Heart right ventricle (tissue), 16 donors: ENCODE measurements at regions of chr20 and their contacts with region 1.

Region 1: DNA sequence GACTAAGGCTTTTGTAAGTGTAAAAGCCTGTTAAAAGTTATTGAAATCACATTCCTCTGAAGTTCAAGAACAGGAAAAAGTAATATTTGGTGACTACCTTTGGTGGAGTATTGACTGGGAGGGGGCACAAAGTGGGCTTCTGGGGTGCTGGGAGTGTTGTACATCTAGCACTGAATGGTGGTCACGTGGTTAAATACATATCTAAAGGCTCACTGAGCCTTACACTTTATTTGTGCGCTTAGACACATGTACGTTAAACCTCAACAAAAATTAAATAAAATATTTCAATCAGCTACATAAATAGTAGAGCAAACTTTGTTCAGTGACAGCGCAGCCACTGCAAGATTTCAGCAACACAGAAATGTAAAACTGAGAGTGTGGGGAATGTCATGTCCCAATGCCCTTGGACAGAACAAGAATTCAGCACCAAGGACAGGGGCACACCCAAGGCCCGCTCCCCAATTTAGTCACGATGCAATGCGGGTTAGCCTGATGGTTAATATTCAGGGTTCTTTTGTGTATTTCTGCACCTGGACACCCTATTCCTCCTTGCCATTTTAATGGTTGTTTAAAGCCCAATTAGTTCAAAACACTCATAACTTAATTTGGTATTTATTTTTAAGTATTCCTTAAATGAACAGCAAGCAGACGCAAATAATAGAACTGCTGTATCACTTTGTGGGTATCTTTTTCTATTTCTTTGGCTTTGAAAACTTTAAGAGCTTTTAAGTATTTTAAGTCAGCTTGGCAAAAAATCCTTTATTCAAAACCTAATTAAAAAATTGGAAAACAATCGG is 37.4 kb downstream of the ANGPT4 start:
- DNase-seq: peak in 1 of 2 donors; percentile 33
- ATAC-seq: no peak
- H3K4me3 ChIP-seq: no peak overlapping the region
- H3K27ac ChIP-seq: no peak overlapping the region
- H3K4me1 ChIP-seq: peaks cover 0 to 11% (median 0%) of the 10 kb centered on the region in 9 donors
- H3K27me3 ChIP-seq: peaks cover 0 to 8% (median 0%) of the 10 kb centered on the region in 7 donors
- CTCF ChIP-seq: no peak

Region 2: GRCh38 chr20:891058-891705 is 12.5 kb after region 1 on chr20:
- intact Hi-C with region 1: loop called in 1 of 10 experiments (anchors 1 kb)
- DNase-seq: peak; percentile 18 to 74
- ATAC-seq: peak; percentile 17 to 95 (median 76)
- H3K4me3 ChIP-seq: no peak overlapping the region
- H3K27ac ChIP-seq: no peak overlapping the region
- H3K4me1 ChIP-seq: peaks cover 0 to 24% (median 13%) of the 10 kb centered on the region in 9 donors
- H3K27me3 ChIP-seq: peaks cover 0 to 18% (median 0%) of the 10 kb centered on the region in 7 donors
- CTCF ChIP-seq: no peak

Region 3: GRCh38 chr20:1166948-1167720 is 288.4 kb after region 1 on chr20:
- intact Hi-C with region 1: no loop called
- DNase-seq: no peak
- ATAC-seq: no peak
- H3K4me3 ChIP-seq: no peak overlapping the region
- H3K27ac ChIP-seq: no peak overlapping the region
- H3K4me1 ChIP-seq: peaks cover 0 to 18% (median 6%) of the 10 kb centered on the region in 9 donors
- H3K27me3 ChIP-seq: no peaks in the 10 kb centered on the region
- CTCF ChIP-seq: no peak